Caki2 (cell line): ENCODE measurements at regions of chr1 and their contacts with region 1.

Region 1: DNA sequence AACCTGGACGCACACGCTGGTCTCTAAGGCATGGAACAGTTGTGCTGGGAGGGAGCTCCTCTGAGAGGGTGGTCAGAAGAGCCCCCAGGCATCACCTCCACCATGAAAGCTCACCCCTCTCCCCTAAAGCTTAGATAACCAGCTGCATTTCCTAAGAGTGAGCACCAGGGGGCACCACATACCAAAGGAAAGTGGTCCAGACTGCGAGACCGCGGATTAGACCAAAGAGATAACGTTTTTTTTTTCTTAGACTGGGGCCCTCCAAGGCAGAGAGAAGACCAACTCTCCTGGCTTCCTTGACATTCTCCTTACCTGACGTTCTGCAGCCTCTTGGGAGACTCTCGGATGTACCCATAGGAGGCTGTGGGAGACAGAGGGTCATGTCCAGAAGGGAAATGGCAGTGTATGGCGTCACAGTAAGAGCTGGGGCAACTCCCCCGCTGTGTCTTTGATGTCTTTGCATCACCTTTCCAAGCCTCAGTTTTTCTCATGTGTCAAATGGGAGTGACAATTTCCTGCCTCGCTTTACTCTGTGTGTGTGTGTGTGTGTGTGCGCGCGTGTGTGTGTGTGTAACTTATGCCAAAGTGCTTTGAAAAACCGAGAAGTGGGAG is 12.3 kb upstream of the IFNLR1 start:
- DNase-seq: peak; percentile 61

Region 2: DNA sequence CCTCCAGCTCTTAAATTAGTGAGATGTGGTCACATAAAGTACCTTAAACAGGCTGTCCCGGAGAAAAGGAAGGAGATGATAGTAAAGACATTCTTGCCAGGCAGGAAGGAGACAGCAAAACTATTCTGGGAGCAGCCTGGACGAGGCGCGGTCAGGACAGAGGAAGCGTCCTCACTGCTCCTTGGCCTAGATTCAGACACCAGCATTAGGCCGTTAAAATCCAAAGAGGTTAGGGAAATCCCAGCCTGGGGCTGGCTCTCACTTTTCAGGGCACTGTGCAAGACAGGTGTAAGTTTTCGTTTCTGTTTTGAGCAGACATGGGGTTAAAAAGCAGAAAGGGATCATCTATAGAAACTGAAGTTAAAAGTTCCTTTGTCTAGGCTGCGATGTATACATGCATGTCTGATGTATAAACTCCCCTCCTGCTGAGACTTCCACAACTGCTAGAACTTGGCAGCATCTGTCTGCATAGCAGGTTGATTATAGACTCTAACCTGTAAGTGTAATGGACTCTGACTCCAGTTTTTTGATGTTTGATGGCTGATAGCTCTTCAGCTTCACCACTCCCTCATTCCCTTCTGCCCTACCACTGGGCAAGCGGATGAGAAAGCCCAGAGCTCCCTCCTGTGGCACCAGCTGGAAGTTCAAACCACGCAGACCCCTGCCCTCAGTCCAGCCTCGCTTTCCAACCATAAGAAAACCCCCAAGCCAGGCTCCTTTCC is 192.6 kb after region 1 on chr1:
- in situ Hi-C with region 1: loop called (anchors 10 kb)
- DNase-seq: no peak

Region 3: GRCh38 chr1:24635195-24635843 is 435.9 kb after region 1 on chr1:
- in situ Hi-C with region 1: loop called (anchors 10 kb)
- DNase-seq: peak; percentile 56